ENCODE measurements at regions of chr3 and their contacts with region 1.

Region 1: DNA sequence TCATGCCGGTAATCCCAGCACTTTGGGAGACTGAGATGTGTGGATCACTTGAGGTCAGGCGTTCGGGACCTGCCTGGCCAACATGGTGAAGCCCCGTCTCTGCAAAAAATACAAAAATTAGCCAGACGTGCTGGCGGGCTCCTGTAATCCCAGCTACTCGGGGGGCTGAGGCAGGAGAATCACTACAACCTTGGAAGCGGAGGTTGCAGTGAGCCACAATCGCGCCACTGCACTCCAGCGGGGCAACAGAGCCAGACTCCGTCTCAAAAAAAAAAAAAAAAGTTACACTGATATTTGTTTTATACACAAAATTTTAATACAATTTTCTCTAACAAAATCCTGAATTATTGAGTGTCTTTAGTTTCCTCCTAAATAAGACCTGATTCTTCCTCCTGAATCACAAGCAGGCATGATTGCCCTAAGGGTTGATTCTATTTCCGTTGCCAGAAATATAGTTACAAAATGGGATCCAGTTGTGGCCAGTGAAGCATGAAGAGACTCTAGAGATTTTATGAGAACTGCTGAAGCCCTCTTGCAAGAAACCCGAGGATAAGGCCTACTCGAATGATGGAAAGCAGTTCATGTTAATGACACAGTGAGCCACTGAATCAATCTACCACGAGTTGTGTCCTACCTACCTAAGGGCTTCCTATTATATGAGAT is 9.6 kb upstream of the SMARCC1 start:
- DNase-seq: no peak
- H3K4me3 Mint-ChIP-seq: no peak overlapping the region
- H3K27ac Mint-ChIP-seq: no peak overlapping the region
- H3K4me1 Mint-ChIP-seq: no peaks in the 10 kb centered on the region
- H3K27me3 Mint-ChIP-seq: no peaks in the 10 kb centered on the region

Region 2: DNA sequence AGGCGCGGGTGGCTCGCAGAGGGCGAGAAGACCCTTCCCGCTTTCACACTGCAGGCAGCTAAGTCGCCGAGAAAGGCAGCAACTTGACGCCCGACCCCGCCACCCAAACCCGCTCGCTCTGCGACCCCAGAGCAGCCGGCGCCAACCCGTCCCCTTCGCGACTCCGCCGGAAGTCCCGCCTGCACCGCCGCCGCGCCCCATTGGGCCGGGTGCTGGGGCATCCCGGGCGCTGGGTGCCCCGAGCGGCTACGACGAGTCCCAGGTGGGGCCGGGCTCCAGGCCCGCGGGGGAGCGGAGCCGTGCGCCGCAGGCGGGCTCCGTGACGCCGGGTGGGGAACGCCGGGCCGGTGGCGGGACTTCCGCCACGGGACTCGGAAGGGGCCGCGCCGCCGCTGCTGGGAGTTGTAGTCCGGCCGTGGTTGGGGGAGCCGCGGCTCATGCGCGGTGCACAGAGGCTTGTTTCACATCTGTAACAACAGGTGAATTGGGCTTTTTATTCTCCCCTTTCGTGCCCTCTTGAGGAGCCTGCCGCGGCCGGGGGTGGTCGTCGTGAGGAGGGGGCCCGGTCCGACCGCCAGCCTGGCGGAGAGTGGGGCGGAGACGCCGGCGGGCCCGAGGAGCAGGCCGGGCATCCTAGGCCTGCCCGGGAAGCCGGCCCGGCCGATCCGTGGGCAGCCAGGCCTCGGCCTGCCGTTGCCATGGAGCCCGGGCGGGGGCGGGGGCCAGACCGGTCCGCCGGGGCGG is 11.6 kb after region 1 on chr3 and contains the start of gene DHX30:
- CTCF ChIA-PET with region 1: interaction called, 3 read pairs
- POLR2A ChIA-PET with region 1: no interaction called
- intact Hi-C with region 1: loop called (anchors 2 kb)
- DNase-seq: peak; percentile 90
- H3K4me3 Mint-ChIP-seq: peak within 1 kb of the TSS; percentile 92
- H3K27ac Mint-ChIP-seq: peak within 1 kb of the TSS; percentile 87
- H3K4me1 Mint-ChIP-seq: peaks cover 21% of the 10 kb centered on the region
- H3K27me3 Mint-ChIP-seq: no peaks in the 10 kb centered on the region
- total RNA-seq, gene DHX30: 76.7 to 77.5 TPM

Measured in activated CD4-positive, alpha-beta memory T cell treated with anti-CD3 and anti-CD28 coated beads for 36 hours (primary cell).